ENCODE measurements at regions of chr5 and their contacts with region 1.

Region 1: GRCh38 chr5:42950440-42951292 is 89.5 kb downstream of the ANXA2R start:
- DNase-seq: peak; percentile 97
- H3K4me3 ChIP-seq: peak overlapping the region; percentile 49
- H3K27ac ChIP-seq: peak overlapping the region; percentile 96
- H3K4me1 ChIP-seq: peaks cover 17% of the 10 kb centered on the region
- H3K27me3 ChIP-seq: no peaks in the 10 kb centered on the region
- CTCF ChIP-seq: no peak

Region 2: GRCh38 chr5:42994246-42995151 is 43.8 kb after region 1 on chr5:
- CTCF ChIA-PET with region 1: interaction called, 9 read pairs
- POLR2A ChIA-PET with region 1: interaction called, 5 read pairs
- intact Hi-C with region 1: loop called (anchors 1 kb)
- DNase-seq: peak; percentile 96
- H3K4me3 ChIP-seq: peak overlapping the region; percentile 61
- H3K27ac ChIP-seq: peak overlapping the region; percentile 77
- H3K4me1 ChIP-seq: peaks cover 9% of the 10 kb centered on the region
- H3K27me3 ChIP-seq: no peaks in the 10 kb centered on the region
- CTCF ChIP-seq: peak; percentile 88

Region 3: DNA sequence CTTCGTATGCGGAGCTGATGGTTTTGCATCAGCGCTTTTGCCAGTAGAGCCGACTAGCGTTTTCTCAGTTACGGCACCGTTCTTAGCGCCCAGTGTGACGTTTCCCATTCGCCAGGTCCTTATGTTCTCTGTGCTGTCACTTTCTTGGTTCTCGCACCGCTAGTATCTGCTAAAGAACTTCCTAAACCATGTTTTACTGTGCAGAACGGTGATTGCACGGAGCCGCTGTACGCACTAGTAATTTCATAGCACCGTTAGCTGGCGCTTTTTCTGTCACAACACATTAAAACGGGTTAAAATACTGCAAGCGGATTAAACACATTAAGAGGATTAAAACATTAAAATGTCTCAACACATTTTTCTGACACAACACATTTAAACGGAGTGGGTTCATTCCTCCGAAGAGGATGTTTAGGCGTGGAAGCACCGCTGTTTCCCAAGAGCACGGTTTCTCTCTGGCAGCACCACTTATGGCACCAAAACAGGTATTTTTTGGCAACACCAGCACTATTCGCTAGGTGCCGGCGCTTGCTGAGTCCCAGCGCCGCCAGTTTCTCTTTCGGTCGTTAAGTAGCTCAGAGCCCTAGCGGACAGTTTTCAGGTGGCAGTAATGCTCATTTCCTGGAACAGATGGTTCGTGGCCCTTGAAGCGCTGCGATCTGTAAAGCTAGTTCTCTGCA is 69.1 kb after region 1 on chr5:
- CTCF ChIA-PET with region 1: no interaction called
- POLR2A ChIA-PET with region 1: no interaction called
- intact Hi-C with region 1: loop called (anchors 2 kb)
- DNase-seq: peak; percentile 89
- H3K4me3 ChIP-seq: peak overlapping the region; percentile 81
- H3K27ac ChIP-seq: peak overlapping the region; percentile 31
- H3K4me1 ChIP-seq: peaks cover 16% of the 10 kb centered on the region
- H3K27me3 ChIP-seq: no peaks in the 10 kb centered on the region
- CTCF ChIP-seq: peak; percentile 52

Region 4: GRCh38 chr5:43066799-43067741 is 116.4 kb after region 1 on chr5:
- CTCF ChIA-PET with region 1: interaction called, 4 read pairs
- POLR2A ChIA-PET with region 1: no interaction called
- intact Hi-C with region 1: loop called (anchors 1 kb)
- DNase-seq: peak; percentile 93
- H3K4me3 ChIP-seq: peak overlapping the region; percentile 74
- H3K27ac ChIP-seq: peak overlapping the region; percentile 95
- H3K4me1 ChIP-seq: peaks cover 24% of the 10 kb centered on the region
- H3K27me3 ChIP-seq: no peaks in the 10 kb centered on the region
- CTCF ChIP-seq: no peak

Measured in A673 (cell line).